ENCODE measurements at regions of chr7 and their contacts with region 1.

Region 1: GRCh38 chr7:77536413-77537135 is 521 bp upstream of the PTPN12 start:
- DNase-seq: peak; percentile 90 to 97 (median 94)
- ATAC-seq: peak; percentile 96
- H3K4me3 ChIP-seq: peak overlapping the region; percentile 100
- H3K4me3 Mint-ChIP-seq: peak overlapping the region; percentile 94 to 99 (median 96)
- H3K27ac ChIP-seq: peak overlapping the region; percentile 73
- H3K27ac Mint-ChIP-seq: peak overlapping the region; percentile 86 to 97 (median 94)
- H3K4me1 ChIP-seq: peaks cover 0 to 8% of the 10 kb centered on the region in 2 donors
- H3K4me1 Mint-ChIP-seq: peaks cover 5 to 38% (median 23%) of the 10 kb centered on the region in 7 donors
- H3K27me3 ChIP-seq: no peaks in the 10 kb centered on the region
- H3K27me3 Mint-ChIP-seq: peaks cover 0 to 12% (median 0%) of the 10 kb centered on the region in 5 donors

Region 2: GRCh38 chr7:76393116-76394031 is 1143.2 kb before region 1 on chr7:
- CTCF ChIA-PET with region 1: no interaction called
- POLR2A ChIA-PET with region 1: no interaction called
- intact Hi-C with region 1: loop called in 1 of 2 experiments (anchors 5 kb)
- DNase-seq: peak; percentile 86 to 96 (median 92)
- ATAC-seq: peak; percentile 89
- H3K4me3 ChIP-seq: peak overlapping the region; percentile 84
- H3K4me3 Mint-ChIP-seq: peak overlapping the region; percentile 78 to 93 (median 90)
- H3K27ac ChIP-seq: peak overlapping the region; percentile 74
- H3K27ac Mint-ChIP-seq: peak overlapping the region; percentile 86 to 97 (median 95)
- H3K4me1 ChIP-seq: peaks cover 14 to 20% of the 10 kb centered on the region in 2 donors
- H3K4me1 Mint-ChIP-seq: peaks cover 8 to 29% (median 23%) of the 10 kb centered on the region in 7 donors
- H3K27me3 ChIP-seq: no peaks in the 10 kb centered on the region
- H3K27me3 Mint-ChIP-seq: no peaks in the 10 kb centered on the region

Region 3: DNA sequence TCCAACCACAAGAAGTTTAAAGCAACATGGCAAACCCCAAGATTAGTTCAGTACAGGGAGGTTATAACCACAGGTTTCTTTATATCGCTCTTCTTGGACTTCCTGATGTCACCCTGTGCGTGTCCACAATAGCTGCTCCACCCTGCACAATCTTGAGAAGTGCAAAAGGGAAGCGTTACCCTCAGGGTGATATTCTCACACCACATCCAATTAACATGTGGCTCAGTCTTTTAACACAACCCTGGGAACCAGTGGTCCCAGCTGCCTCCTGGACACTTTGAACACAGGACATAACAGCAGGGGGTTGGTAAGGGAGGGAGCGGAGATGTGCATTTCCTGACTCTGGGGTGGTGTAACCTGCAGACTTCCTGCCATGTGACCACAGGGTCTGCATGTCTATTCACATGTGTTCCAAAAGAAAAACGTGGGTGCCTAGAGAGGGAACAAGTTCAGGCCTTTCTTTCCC is 185.0 kb before region 1 on chr7:
- CTCF ChIA-PET with region 1: no interaction called
- POLR2A ChIA-PET with region 1: interaction called, 3 read pairs
- intact Hi-C with region 1: loop called (anchors 1 kb)
- DNase-seq: peak; percentile 14 to 69 (median 57)
- ATAC-seq: peak; percentile 90
- H3K4me3 ChIP-seq: peak overlapping the region; percentile 6
- H3K4me3 Mint-ChIP-seq: peak overlapping the region; percentile 70 to 96 (median 85)
- H3K27ac ChIP-seq: peak overlapping the region; percentile 42
- H3K27ac Mint-ChIP-seq: peak overlapping the region; percentile 84 to 96 (median 90)
- H3K4me1 ChIP-seq: peaks cover 55 to 59% of the 10 kb centered on the region in 2 donors
- H3K4me1 Mint-ChIP-seq: peaks cover 47 to 82% (median 79%) of the 10 kb centered on the region in 7 donors
- H3K27me3 ChIP-seq: no peaks in the 10 kb centered on the region
- H3K27me3 Mint-ChIP-seq: peaks cover 0 to 11% (median 0%) of the 10 kb centered on the region in 5 donors

Region 4: GRCh38 chr7:77550586-77550985 is 14.0 kb after region 1 on chr7:
- CTCF ChIA-PET with region 1: no interaction called
- POLR2A ChIA-PET with region 1: interaction called, 3 read pairs
- intact Hi-C with region 1: loop called in 1 of 2 experiments (anchors 1 kb)
- DNase-seq: no peak
- ATAC-seq: no peak
- H3K4me3 ChIP-seq: no peak overlapping the region
- H3K4me3 Mint-ChIP-seq: no peak overlapping the region
- H3K27ac ChIP-seq: no peak overlapping the region
- H3K27ac Mint-ChIP-seq: no peak overlapping the region
- H3K4me1 ChIP-seq: no peaks in the 10 kb centered on the region
- H3K4me1 Mint-ChIP-seq: peaks cover 10 to 50% (median 23%) of the 10 kb centered on the region in 7 donors
- H3K27me3 ChIP-seq: no peaks in the 10 kb centered on the region
- H3K27me3 Mint-ChIP-seq: no peaks in the 10 kb centered on the region

Region 5: GRCh38 chr7:77563275-77563674 is 26.7 kb after region 1 on chr7:
- CTCF ChIA-PET with region 1: no interaction called
- POLR2A ChIA-PET with region 1: no interaction called
- intact Hi-C with region 1: no loop called
- DNase-seq: no peak
- ATAC-seq: no peak
- H3K4me3 ChIP-seq: no peak overlapping the region
- H3K4me3 Mint-ChIP-seq: peak overlapping the region in 1 of 10 donors; percentile 2
- H3K27ac ChIP-seq: no peak overlapping the region
- H3K27ac Mint-ChIP-seq: no peak overlapping the region
- H3K4me1 ChIP-seq: peaks cover 0 to 4% of the 10 kb centered on the region in 2 donors
- H3K4me1 Mint-ChIP-seq: peaks cover 0 to 45% (median 6%) of the 10 kb centered on the region in 7 donors
- H3K27me3 ChIP-seq: no peaks in the 10 kb centered on the region
- H3K27me3 Mint-ChIP-seq: no peaks in the 10 kb centered on the region

Region 6: DNA sequence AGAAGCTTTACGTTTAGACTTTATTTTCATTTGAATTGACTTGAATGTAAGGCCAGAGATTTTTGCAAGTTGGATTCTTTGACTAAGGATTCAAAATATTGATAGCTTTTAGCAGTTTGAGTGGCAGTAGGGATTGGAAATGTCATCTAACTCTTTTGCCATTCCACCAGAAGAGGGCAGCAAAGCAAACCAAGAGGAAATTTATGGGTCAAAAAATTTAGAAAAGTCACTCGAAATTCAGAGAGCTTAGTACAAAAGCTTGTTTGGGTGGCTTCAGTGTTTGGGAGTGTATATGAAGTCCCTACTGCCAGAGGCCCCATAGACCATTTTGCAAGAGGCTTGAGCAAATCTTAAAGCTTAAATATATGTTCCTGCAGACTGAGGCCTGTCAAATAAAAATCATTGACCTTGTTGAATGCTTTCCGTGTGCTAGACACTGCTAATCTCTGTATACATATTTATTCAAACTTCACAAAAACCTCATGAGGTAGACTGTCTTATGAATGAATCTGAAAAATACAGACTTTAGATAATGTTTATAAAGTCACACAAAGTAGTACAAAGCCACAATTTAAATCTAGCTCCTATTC is 115.1 kb after region 1 on chr7:
- CTCF ChIA-PET with region 1: no interaction called
- POLR2A ChIA-PET with region 1: no interaction called
- intact Hi-C with region 1: loop called in 1 of 2 experiments (anchors 2 kb)
- DNase-seq: peak in 7 of 9 donors; percentile 9 to 56 (median 38)
- ATAC-seq: peak; percentile 52
- H3K4me3 ChIP-seq: no peak overlapping the region
- H3K4me3 Mint-ChIP-seq: no peak overlapping the region
- H3K27ac ChIP-seq: no peak overlapping the region
- H3K27ac Mint-ChIP-seq: no peak overlapping the region
- H3K4me1 ChIP-seq: no peaks in the 10 kb centered on the region
- H3K4me1 Mint-ChIP-seq: peaks cover 0 to 2% (median 0%) of the 10 kb centered on the region in 7 donors
- H3K27me3 ChIP-seq: no peaks in the 10 kb centered on the region
- H3K27me3 Mint-ChIP-seq: no peaks in the 10 kb centered on the region

Region 7: DNA sequence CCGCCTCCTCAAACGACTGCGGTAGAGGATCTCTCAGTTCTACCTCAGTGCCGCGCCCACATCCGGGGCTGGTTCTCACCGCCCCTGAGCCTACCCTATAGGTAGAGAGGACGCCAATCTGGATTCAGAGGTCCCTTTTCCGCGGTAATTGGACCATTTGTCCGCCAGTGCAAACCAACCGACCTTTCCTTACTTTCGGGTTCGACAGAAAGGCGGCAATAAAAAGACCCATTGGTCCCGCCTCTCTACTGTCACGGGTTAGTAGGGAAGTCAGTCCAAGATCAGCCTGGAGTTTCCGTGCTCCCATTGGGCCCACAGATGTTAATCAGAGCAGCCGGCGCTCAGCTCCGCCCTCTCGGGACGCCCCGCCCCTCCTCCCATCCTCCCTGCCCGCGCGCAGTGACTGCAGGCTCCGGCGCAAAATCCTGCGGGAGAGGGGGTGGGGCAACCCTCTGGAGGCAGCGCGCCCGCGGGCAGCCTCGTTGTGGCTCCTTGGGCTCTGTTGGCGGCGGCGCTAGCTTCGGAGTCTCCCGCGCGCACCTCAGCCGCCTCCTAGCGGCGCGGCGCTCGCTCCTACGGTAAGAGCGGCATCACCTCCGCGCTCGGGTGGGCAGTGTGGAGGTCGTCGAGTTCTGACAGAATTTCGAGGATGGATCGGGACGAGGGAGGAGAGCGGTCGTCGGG is 262.0 kb after region 1 on chr7 and contains the starts of genes PHTF2 and TMEM60:
- CTCF ChIA-PET with region 1: no interaction called
- POLR2A ChIA-PET with region 1: no interaction called
- intact Hi-C with region 1: loop called (anchors 1 kb)
- DNase-seq: peak; percentile 78 to 97 (median 95)
- ATAC-seq: peak; percentile 94
- H3K4me3 ChIP-seq: peak within 1 kb of the TSS; percentile 85
- H3K4me3 Mint-ChIP-seq: peak within 1 kb of the TSS; percentile 87 to 99 (median 96)
- H3K27ac ChIP-seq: peak within 1 kb of the TSS; percentile 73
- H3K27ac Mint-ChIP-seq: peak within 1 kb of the TSS; percentile 89 to 96 (median 94)
- H3K4me1 ChIP-seq: peaks cover 45 to 52% of the 10 kb centered on the region in 2 donors
- H3K4me1 Mint-ChIP-seq: peaks cover 53 to 83% (median 79%) of the 10 kb centered on the region in 7 donors
- H3K27me3 ChIP-seq: no peaks in the 10 kb centered on the region
- H3K27me3 Mint-ChIP-seq: no peaks in the 10 kb centered on the region
- total RNA-seq, gene PHTF2: 17.6 to 42.1 (median 22.4) TPM
- total RNA-seq, gene TMEM60: 3.7 to 16.9 (median 12.0) TPM

Region 8: DNA sequence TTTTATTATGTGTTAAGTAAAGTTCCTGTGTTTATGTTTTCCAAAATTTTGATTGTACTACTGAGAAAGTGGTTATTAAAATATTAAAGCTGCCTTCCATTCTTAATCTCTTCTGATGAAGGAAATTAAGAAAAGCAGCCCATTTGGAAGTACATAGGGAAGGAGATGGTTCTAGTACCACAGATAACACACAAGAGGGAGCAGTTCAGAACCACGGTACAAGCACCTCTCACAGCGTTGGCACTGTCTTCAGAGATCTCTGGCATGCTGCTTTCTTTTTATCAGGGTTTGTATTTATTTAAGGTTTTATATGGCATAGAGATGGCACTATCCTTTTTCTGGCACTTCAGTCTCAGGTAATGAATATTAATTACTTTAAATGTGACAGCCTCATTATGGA is 373.6 kb after region 1 on chr7:
- CTCF ChIA-PET with region 1: no interaction called
- POLR2A ChIA-PET with region 1: no interaction called
- intact Hi-C with region 1: no loop called
- DNase-seq: no peak
- ATAC-seq: no peak
- H3K4me3 ChIP-seq: no peak overlapping the region
- H3K4me3 Mint-ChIP-seq: no peak overlapping the region
- H3K27ac ChIP-seq: no peak overlapping the region
- H3K27ac Mint-ChIP-seq: peak overlapping the region in 1 of 9 donors; percentile 36
- H3K4me1 ChIP-seq: no peaks in the 10 kb centered on the region
- H3K4me1 Mint-ChIP-seq: peaks cover 0 to 21% (median 9%) of the 10 kb centered on the region in 7 donors
- H3K27me3 ChIP-seq: no peaks in the 10 kb centered on the region
- H3K27me3 Mint-ChIP-seq: no peaks in the 10 kb centered on the region